B cell (primary cell): ENCODE measurements at regions of chr9 and their contacts with region 1.

Region 1: DNA sequence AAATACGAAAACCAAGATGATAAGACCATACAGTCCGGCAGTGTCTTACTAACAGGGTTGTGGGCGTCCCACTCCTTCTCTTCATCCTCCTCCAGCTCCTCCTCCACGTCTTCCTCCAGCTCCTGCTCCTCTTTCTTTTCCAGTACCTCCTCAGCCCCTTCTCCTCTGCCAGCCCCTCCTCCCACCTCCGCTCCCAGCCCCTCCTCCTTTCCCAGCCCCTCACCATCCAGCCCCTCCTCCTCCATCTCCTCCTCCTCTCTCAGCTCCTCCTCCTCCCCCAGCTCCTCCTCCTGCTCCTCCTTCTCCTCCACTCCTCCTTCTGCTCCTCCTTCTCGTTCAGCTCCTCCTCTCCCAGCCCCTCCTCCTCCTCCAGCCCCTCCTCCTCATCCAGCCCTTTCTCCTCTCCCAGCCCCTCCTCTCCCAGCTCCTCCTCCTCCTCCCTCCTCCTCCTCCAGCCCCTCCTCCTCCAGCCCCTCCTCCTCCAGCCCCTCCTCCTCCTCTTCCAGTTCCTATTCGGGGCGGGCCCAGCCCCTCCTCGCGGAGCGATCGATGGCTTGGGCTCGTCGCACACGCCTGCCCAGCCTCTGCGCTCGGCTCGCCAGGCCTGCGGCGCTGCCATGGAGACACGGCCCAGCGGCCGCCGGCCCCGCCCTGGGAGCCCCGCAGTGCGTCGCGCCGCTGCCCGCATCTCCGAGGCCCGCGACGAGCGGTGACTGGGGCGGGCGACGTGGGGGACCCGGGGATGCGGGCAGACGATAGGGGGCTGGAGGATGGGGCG is at the start of gene BRD3OS:
- DNase-seq: peak; percentile 97
- ATAC-seq: peak; percentile 93
- H3K4me3 ChIP-seq: peak within 1 kb of the TSS; percentile 53 to 85 (median 76)
- H3K4me3 Mint-ChIP-seq: peak within 1 kb of the TSS; percentile 86
- H3K27ac ChIP-seq: peak within 1 kb of the TSS; percentile 34 to 69
- H3K27ac Mint-ChIP-seq: peak within 1 kb of the TSS; percentile 88
- H3K4me1 ChIP-seq: peaks cover 6 to 19% of the 10 kb centered on the region in 2 donors
- H3K4me1 Mint-ChIP-seq: peaks cover 11% of the 10 kb centered on the region
- H3K27me3 ChIP-seq: no peaks in the 10 kb centered on the region
- H3K27me3 Mint-ChIP-seq: no peaks in the 10 kb centered on the region
- CTCF ChIP-seq: no peak
- total RNA-seq, gene BRD3OS: 25.3 and 26.8 TPM in 2 replicates

Region 2: DNA sequence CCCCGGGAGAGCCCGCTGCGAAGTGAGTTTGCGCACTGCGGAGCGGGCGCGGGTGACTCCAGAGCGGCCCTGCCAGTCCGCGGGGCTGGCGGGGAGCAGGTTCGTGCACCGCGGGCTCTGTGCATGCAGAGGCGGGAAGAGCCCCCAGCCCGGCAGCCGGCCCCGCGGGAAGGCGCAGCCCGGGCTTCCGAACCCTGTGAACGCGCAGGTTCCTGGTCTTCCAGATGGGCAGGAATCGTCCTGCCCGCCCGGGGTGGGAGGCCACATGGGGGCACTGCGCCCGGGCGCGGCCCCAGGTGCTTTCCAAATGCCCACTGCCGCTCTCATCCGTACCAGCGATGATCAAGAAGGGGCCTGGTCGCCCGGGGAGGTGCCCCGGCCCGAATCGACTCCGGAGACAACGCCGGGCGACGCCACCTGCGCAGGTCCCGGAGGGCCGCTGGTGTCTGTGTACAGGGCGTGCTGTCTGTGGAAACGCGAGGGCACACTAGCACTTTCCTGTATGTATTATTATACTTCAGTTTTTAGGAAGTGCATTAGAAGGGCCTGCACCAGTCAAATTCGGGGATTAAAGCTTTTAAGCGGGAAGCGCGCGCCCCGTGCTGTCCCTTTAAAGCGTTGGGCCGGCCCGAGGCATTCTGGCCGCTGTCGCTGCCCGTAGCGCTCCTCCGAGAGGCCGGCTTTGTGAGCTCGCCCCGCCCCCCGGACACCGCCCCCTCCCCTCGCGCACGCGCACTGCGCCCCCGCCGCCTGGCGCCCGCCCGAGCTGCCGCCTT is 110.5 kb after region 1 on chr9 and contains the start of gene WDR5:
- CTCF ChIA-PET with region 1: no interaction called
- POLR2A ChIA-PET with region 1: no interaction called
- intact Hi-C with region 1: loop called (anchors 2 kb)
- DNase-seq: peak; percentile 93
- ATAC-seq: peak; percentile 86
- H3K4me3 ChIP-seq: peak within 1 kb of the TSS; percentile 46 to 98 (median 92)
- H3K4me3 Mint-ChIP-seq: peak within 1 kb of the TSS; percentile 91
- H3K27ac ChIP-seq: peak within 1 kb of the TSS; percentile 56 to 85
- H3K27ac Mint-ChIP-seq: peak within 1 kb of the TSS; percentile 93
- H3K4me1 ChIP-seq: peaks cover 22 to 30% of the 10 kb centered on the region in 2 donors
- H3K4me1 Mint-ChIP-seq: peaks cover 36% of the 10 kb centered on the region
- H3K27me3 ChIP-seq: no peaks in the 10 kb centered on the region
- H3K27me3 Mint-ChIP-seq: no peaks in the 10 kb centered on the region
- CTCF ChIP-seq: peak; percentile 37
- total RNA-seq, gene WDR5: 21.1 and 23.8 TPM in 2 replicates

Region 3: DNA sequence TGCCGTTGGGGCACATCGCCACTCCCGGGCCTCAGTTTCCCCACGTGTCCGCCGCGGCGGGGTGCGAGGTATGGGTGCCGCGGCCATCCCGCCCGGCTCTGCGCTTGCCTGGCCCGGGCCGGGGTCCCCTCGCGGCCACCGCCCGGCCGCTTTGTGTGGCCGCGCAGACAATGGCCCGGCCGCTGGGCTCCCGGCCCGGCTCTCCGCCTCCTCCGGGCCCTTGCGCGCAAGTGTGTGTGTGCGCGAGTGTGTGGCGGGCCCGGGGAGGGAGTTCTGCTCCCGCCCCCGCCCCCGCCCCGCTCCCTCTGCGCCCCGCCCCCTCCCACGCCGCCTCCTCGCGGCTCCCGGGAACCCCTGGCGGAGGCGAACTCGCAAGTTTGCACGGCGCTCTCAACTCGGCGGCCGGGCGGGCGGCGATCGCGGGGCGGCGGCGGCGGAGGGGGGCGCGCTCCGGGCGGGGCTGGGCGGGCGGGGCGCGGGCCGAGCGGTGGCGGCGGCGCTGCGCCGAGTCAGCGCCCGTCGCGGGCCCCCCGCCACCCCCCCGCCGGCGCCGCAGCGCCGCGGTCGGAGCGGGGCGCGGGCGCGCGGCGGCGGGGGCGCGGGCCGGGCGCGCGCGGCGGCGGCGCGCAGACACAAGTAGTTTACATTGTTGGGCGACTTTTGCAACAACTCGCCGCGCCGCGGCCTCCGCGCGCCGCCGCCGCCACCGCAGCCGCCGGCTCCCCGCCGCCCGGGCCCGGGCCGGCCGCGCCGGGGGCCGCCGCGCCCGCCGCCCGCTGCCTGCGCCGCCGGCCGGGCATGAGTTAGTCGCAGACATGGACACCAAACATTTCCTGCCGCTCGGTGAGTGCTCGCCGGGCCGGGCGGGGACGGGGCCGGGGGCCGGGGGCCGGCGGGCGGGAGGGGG is 301.1 kb after region 1 on chr9 and contains the start of gene RXRA:
- CTCF ChIA-PET with region 1: no interaction called
- POLR2A ChIA-PET with region 1: no interaction called
- intact Hi-C with region 1: no loop called
- DNase-seq: peak; percentile 83
- ATAC-seq: peak; percentile 77
- H3K4me3 ChIP-seq: peak within 1 kb of the TSS; percentile 17 to 85 (median 78)
- H3K4me3 Mint-ChIP-seq: peak within 1 kb of the TSS; percentile 82
- H3K27ac ChIP-seq: no peak within 1 kb of the TSS
- H3K27ac Mint-ChIP-seq: peak within 1 kb of the TSS; percentile 68
- H3K4me1 ChIP-seq: peaks cover 11 to 20% of the 10 kb centered on the region in 2 donors
- H3K4me1 Mint-ChIP-seq: peaks cover 17% of the 10 kb centered on the region
- H3K27me3 ChIP-seq: peaks cover 0 to 13% (median 3%) of the 10 kb centered on the region in 4 experiments
- H3K27me3 Mint-ChIP-seq: no peaks in the 10 kb centered on the region
- CTCF ChIP-seq: no peak
- total RNA-seq, gene RXRA: 6.7 and 6.8 TPM in 2 replicates